ENCODE measurements at regions of chr20 and their contacts with region 1.

Region 1: GRCh38 chr20:16801919-16802911 is 54.1 kb downstream of the OTOR start:
- DNase-seq: peak; percentile 66
- ATAC-seq: peak; percentile 58 to 71
- H3K4me3 ChIP-seq: no peak overlapping the region
- H3K27ac ChIP-seq: no peak overlapping the region
- H3K4me1 ChIP-seq: no peaks in the 10 kb centered on the region
- H3K27me3 ChIP-seq: peaks cover 10% of the 10 kb centered on the region
- CTCF ChIP-seq: peak; percentile 83

Region 2: GRCh38 chr20:16607364-16608276 is 194.6 kb before region 1 on chr20:
- intact Hi-C with region 1: no loop called
- DNase-seq: no peak
- ATAC-seq: no peak
- H3K4me3 ChIP-seq: no peak overlapping the region
- H3K27ac ChIP-seq: no peak overlapping the region
- H3K4me1 ChIP-seq: no peaks in the 10 kb centered on the region
- H3K27me3 ChIP-seq: no peaks in the 10 kb centered on the region
- CTCF ChIP-seq: no peak

Region 3: DNA sequence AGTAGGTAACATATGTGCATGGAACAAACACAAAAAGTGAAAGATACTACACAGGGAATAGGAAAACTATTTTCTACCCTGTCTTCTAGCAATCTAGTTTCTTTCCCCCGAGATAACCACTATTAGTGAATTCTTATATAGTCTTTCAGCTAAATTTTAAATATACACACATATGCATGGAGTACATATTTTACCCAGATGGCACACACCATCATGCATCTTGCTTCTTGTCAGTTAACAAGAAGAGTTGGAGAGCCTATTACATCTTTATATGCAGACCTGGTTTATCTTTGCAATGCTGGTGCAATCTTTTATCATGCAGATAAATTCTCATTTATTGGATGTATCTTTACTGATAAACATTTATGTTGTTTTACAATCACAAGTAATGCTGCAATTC is 46.3 kb after region 1 on chr20:
- intact Hi-C with region 1: no loop called
- DNase-seq: no peak
- ATAC-seq: no peak
- H3K4me3 ChIP-seq: no peak overlapping the region
- H3K27ac ChIP-seq: no peak overlapping the region
- H3K4me1 ChIP-seq: no peaks in the 10 kb centered on the region
- H3K27me3 ChIP-seq: no peaks in the 10 kb centered on the region
- CTCF ChIP-seq: no peak

Region 4: DNA sequence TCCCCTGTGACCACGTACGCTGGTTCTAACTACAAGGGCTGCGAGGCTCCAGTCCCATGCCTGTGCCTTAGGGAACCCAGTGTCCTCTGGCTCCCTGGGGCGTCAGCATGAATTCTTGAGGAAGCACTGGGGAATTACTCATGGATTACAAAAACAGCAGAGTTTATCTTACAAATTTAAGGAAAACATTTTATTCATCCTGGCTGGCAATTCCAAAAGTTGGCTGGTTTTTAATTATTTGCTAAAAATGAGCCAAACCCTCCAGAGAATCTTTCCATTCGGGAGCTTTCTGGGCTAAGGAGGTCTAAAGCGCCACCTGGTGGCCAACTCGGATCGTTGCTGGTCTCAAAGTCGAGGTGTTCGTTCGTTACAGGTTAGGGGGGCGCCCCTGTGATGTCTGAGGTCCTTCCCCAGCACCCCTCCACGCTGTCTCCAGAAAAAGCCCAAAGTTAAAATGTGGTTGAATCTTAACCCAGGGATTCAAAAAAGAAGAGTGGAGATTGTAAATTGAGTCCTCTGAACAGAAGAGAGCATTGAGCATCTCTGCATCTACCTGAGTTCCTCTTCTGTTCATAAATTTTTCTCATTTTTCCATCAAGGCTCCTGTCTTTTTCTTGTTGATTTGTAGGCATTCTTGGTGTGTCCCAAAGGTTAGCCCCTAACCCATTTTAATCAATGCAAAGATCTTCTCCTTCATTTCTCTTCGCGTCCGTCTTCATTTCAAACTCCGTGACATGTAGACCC is 629.6 kb after region 1 on chr20:
- intact Hi-C with region 1: loop called (anchors 5 kb)
- DNase-seq: peak; percentile 64
- ATAC-seq: peak; percentile 55 to 69
- H3K4me3 ChIP-seq: no peak overlapping the region
- H3K27ac ChIP-seq: no peak overlapping the region
- H3K4me1 ChIP-seq: no peaks in the 10 kb centered on the region
- H3K27me3 ChIP-seq: no peaks in the 10 kb centered on the region
- CTCF ChIP-seq: peak; percentile 87

Measured in lower lobe of right lung (tissue), 2 donors.